IMR-90 (cell line): ENCODE measurements at regions of chr2 and their contacts with region 1.

Region 1: DNA sequence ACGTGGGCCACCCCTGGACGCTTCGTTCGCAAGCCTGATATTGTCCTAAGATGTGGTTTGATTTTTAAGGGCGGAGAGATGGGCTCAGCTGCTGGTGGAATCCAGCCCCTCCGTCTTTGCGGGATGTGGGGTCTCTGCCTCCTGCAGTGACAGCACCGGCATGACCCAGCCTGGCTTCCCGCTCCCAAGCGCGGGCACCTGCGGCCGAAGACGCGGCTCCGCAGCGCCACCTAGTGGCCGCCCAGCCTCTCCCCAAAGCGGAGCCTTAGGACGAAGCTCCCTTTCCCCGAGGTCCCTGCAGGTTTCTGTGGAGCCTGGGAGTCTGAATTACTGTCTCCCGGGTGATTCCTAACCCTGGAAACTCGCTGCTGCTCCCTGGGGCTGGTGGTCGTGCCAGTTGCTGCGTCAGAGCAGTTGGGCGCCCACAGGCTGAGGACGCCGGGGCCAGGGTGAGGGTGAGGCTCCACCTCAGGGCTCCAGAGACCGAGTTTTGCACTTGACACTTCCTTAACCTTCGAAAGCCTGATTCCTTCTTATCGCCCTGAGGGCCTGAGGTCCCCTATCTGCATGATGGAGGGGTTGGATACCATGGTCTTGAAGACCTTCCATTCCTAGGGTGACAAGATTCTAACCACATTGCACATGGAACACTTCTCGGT is 137.5 kb downstream of the TPO start:
- DNase-seq: peak; percentile 22
- ATAC-seq: peak; percentile 67
- H3K4me3 ChIP-seq: no peak overlapping the region
- H3K27ac ChIP-seq: no peak overlapping the region
- H3K4me1 ChIP-seq: peaks cover 18% of the 10 kb centered on the region
- H3K27me3 ChIP-seq: no peaks in the 10 kb centered on the region; the same call in 1 of the 2 replicates
- CTCF ChIP-seq: peak; percentile 77
- POLR2A ChIP-seq: no peak
- RAD21 ChIP-seq: peak; percentile 58

Region 2: DNA sequence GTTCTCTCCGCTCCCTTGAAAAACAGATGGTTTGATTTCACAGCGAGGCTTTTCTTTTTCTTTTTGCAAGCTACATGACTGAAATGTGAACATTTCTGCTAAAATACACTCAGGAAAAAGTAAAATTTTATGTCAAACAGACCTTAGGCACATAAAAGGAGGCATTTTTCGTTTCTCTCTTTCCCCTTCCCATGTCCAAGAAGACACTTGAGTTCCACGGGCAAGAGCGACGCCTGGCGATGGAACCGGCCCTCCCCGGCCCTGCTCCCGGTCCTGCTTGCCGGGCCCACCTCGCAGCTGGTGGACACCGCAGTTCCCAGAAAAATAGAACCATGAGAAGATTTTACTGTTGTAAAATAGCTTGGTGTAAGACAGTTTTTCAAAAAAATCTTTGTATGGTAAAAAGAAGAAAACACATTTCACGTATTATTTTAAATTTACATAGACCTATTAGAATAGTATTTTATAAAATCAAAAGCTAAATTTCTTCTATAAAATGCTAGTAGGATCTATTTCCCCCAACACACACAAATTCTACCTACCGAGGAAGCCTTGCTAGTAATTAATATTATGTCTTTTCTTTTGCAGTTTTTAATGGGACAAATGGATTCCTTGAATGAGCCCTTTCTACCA is 1260.6 kb before region 1 on chr2:
- CTCF ChIA-PET with region 1: no interaction called
- POLR2A ChIA-PET with region 1: no interaction called
- dilution Hi-C with region 1: no loop called
- in situ Hi-C with region 1: no loop called
- intact Hi-C with region 1: loop called (anchors 5 kb)
- DNase-seq: peak; percentile 78
- ATAC-seq: peak; percentile 83
- H3K4me3 ChIP-seq: peak overlapping the region; percentile 50
- H3K27ac ChIP-seq: no peak overlapping the region
- H3K4me1 ChIP-seq: peaks cover 7% of the 10 kb centered on the region
- H3K27me3 ChIP-seq: peaks cover 24% of the 10 kb centered on the region
- CTCF ChIP-seq: peak; percentile 91
- POLR2A ChIP-seq: no peak
- RAD21 ChIP-seq: peak; percentile 89

Region 3: GRCh38 chr2:854460-854859 is 696.3 kb before region 1 on chr2:
- CTCF ChIA-PET with region 1: no interaction called
- POLR2A ChIA-PET with region 1: no interaction called
- dilution Hi-C with region 1: no loop called
- in situ Hi-C with region 1: loop called (anchors 10 kb)
- intact Hi-C with region 1: no loop called
- DNase-seq: no peak
- ATAC-seq: no peak
- H3K4me3 ChIP-seq: no peak overlapping the region
- H3K27ac ChIP-seq: no peak overlapping the region
- H3K4me1 ChIP-seq: no peaks in the 10 kb centered on the region
- H3K27me3 ChIP-seq: no peaks in the 10 kb centered on the region
- CTCF ChIP-seq: peak; percentile 41
- POLR2A ChIP-seq: no peak
- RAD21 ChIP-seq: peak; percentile 28; the same call in 1 of the 2 replicates

Region 4: DNA sequence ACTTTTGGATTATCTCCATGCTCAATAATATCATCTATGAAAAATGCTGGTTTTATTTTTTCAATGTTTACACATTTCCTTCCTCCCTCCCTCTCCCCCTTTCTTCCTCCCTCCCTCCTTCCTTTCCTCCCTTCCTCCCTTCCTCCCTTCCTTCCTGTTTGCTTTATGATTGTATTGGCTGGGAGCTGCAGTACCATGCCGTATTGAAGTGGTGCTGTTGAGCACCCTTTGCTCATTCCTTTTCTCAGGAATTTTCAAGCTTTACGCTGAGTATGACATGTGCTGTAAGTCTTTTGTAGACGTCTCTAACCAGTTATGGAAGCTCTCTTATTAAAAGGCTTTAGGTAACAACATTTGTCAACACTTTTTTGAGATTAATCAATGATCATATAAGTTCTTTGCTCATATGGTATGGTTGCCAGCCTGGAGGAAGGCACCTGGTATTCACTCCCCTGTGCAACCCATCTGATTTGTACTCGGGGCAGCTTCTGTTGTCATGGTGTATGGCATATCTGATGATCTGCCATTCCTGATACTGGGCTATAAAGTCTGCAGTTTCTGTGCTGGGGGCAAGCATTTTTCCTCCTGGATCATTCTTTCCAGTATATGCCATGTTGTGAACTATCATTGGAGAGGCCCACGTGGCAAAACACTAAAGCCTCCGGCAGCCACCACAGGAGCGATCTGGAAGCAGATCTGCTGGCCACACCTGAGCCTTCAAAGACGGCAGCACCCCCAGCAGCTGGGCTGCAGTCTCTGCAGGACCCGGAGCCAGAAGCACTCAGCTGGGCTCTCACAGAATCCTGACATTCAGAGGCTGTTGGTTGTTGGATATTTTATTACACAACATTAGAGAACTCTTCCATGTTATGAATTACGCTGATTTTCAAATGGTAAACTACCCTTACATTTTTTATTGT is 499.5 kb before region 1 on chr2:
- CTCF ChIA-PET with region 1: no interaction called
- POLR2A ChIA-PET with region 1: no interaction called
- dilution Hi-C with region 1: no loop called
- in situ Hi-C with region 1: no loop called
- intact Hi-C with region 1: loop called (anchors 10 kb)
- DNase-seq: peak; percentile 37
- ATAC-seq: no peak
- H3K4me3 ChIP-seq: no peak overlapping the region
- H3K27ac ChIP-seq: no peak overlapping the region
- H3K4me1 ChIP-seq: peaks cover 16% of the 10 kb centered on the region
- H3K27me3 ChIP-seq: no peaks in the 10 kb centered on the region
- CTCF ChIP-seq: peak; percentile 26; the same call in 1 of the 2 replicates
- POLR2A ChIP-seq: no peak
- RAD21 ChIP-seq: no peak

Region 5: GRCh38 chr2:1750933-1751766 is 200.4 kb after region 1 on chr2:
- CTCF ChIA-PET with region 1: interaction called, 3 read pairs
- POLR2A ChIA-PET with region 1: no interaction called
- dilution Hi-C with region 1: no loop called
- in situ Hi-C with region 1: no loop called
- intact Hi-C with region 1: loop called (anchors 2 kb)
- DNase-seq: peak; percentile 86
- ATAC-seq: peak; percentile 93
- H3K4me3 ChIP-seq: no peak overlapping the region
- H3K27ac ChIP-seq: 0 out of 2 replicates have a peak overlapping the region, but pooled peaks have one; percentile 4
- H3K4me1 ChIP-seq: peaks cover 19% of the 10 kb centered on the region
- H3K27me3 ChIP-seq: no peaks in the 10 kb centered on the region
- CTCF ChIP-seq: peak; percentile 95
- POLR2A ChIP-seq: no peak
- RAD21 ChIP-seq: peak; percentile 88